ENCODE measurements at regions of chr2 and their contacts with region 1.

Region 1: GRCh38 chr2:222952204-222952603 is 91.4 kb downstream of the ACSL3 start:
- DNase-seq: no peak
- ATAC-seq: no peak
- H3K4me3 ChIP-seq: no peak overlapping the region
- H3K27ac ChIP-seq: no peak overlapping the region
- H3K4me1 ChIP-seq: no peaks in the 10 kb centered on the region
- CTCF ChIP-seq: no peak
- EP300 ChIP-seq: no peak
- POLR2A ChIP-seq: no peak
- RAD21 ChIP-seq: no peak

Region 2: DNA sequence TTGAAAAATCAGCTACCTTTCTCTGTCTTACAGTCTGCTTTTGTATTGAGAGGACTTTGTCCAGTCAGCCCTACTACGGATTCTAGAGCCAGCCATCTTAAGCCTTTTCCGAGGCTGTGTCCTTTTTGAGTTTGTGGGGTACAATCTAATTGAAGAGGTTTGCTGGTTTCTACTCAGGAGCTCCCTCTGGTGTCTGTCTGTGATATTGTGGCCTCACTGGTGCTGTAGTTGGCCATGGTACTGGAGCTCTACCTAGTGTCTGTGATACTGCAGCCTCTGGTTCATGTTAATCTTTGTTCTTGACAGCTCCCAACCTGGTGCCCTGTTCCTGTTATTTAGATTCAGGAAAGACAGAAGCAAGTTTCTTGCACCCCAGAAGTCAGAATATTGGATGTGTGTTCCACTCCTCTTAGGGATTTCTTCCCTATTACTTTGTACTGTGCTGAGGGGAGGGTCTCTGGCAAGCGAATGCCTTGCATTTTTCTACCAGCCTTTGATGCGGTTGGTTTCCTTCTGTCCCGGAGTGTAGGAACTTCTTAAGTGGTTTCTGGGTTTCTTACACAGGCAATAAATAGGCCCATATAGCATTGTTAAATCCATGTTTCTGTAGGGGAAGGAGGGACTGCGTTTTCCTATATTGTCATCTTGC is 12.9 kb before region 1 on chr2:
- CTCF ChIA-PET with region 1: interaction called, 10 read pairs
- POLR2A ChIA-PET with region 1: no interaction called
- DNase-seq: peak in 1 of 2 experiments; percentile 72
- ATAC-seq: peak; percentile 89 to 94
- H3K4me3 ChIP-seq: no peak overlapping the region
- H3K27ac ChIP-seq: no peak overlapping the region
- H3K4me1 ChIP-seq: peaks cover 21% of the 10 kb centered on the region; the same call in 2 of the 3 replicates
- CTCF ChIP-seq: peak; percentile 72
- EP300 ChIP-seq: no peak
- POLR2A ChIP-seq: no peak
- RAD21 ChIP-seq: peak; percentile 62 to 74